SK-N-SH (cell line): ENCODE measurements at regions of chr12 and their contacts with region 1.

Region 1: DNA sequence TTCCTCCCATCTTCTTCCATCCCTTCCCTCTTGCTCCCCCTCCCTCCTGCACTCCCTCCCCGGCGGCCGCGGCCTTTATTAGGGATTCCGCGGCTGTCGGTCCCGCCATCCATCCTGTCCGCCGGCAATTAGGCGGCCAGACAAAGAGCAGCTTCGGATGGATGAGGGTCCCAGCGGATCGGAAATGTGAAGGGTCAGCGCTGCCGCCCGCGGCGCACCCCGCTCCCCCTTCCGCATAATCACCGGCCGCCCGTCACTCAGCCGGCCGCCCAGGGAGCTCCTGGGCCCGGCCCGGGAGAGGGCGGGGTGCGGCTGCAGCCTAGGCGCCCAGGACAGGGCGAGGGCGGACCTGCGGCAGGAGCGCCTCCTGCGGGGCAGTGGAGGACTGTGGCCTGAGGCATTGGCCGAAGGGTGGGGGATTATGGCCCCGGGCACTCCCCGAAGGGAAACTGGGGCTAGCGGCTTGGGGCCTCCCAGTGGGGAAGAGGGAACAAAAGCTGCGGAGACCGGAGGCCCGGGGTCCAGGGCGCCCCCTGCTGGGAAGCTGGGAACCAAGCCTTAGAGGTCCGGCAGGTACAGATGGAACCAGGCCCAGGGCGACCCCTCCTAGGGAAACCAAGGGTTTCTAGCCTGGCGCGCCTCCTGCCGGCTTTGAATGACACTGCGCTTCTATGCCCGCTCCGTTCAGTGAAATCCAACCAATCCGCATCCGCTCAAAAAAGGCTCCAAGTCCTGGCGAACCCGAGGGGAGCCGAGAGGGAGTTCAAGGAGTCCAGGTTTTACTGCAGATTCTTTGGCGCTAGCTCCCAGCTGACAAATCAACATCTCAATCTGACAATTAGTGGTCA is 4.4 kb upstream of the DNAJC22 start:
- DNase-seq: peak; percentile 96
- H3K4me3 ChIP-seq: peak overlapping the region; percentile 37 to 52
- H3K27ac ChIP-seq: no peak overlapping the region
- H3K4me1 ChIP-seq: peaks cover 14 to 39% of the 10 kb centered on the region in 2 experiments; a peak in 2 of 4 replicates
- H3K27me3 ChIP-seq: peaks cover 5% of the 10 kb centered on the region; the same call in 1 of the 2 replicates
- CTCF ChIP-seq: peak; percentile 95
- EP300 ChIP-seq: no peak
- RAD21 ChIP-seq: peak; percentile 71

Region 2: DNA sequence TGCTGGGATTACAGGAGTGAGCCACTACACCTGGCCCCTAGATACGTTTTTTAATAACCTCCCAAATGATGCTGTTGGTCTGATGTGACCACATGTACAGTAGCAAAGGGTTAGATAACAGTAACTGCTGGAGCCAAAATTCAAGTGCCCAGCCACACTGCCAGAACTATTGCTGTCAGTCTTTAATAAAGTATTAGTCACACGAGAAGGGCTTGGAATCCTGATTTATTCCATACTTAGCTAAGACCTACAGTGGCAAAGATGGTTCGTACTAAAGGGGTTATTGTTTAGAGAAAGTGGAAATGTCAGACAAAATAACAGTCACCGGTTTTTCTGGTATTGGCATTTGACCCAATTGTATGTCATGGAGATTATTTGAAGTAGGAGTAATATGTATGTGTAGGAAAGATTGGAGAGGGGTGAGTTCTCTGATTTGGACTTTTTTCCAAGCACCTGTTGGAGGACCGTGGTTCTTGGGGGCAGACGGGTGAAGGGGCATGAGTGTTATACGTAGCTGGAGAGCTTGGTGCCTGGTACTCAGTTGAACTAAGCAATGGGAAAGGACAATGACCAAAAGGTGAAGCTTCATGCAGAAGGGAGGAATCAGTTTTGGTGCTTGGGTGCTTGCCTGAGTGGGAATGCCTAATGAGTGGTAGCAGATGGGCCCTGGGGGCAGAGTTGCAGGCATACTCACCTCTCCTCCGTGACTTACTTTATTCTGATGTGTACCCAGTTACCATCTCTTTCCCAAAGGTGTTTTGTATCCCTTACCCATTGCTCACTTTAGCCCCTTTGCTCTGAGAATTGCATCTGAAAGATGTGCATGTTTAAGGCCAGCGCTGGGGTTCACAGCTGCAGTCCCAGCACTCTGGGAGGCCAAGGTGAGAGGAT is 67.6 kb before region 1 on chr12:
- CTCF ChIA-PET with region 1: interaction called, 658 read pairs
- POLR2A ChIA-PET with region 1: no interaction called
- DNase-seq: no peak
- H3K4me3 ChIP-seq: no peak overlapping the region
- H3K27ac ChIP-seq: no peak overlapping the region
- H3K4me1 ChIP-seq: peaks cover 6 to 15% of the 10 kb centered on the region in 2 experiments; a peak in 2 of 4 replicates
- H3K27me3 ChIP-seq: no peaks in the 10 kb centered on the region
- CTCF ChIP-seq: no peak
- EP300 ChIP-seq: no peak
- RAD21 ChIP-seq: no peak

Region 3: GRCh38 chr12:49322708-49323523 is 19.4 kb before region 1 on chr12 and contains the start of gene TROAP:
- CTCF ChIA-PET with region 1: interaction called, 48 read pairs
- POLR2A ChIA-PET with region 1: interaction called, 9 read pairs
- DNase-seq: peak; percentile 97
- H3K4me3 ChIP-seq: peak within 1 kb of the TSS; percentile 67 to 88
- H3K27ac ChIP-seq: peak within 1 kb of the TSS; percentile 58 to 65
- H3K4me1 ChIP-seq: peaks cover 0 to 14% of the 10 kb centered on the region in 2 experiments; a peak in 1 of 4 replicates
- H3K27me3 ChIP-seq: no peaks in the 10 kb centered on the region
- CTCF ChIP-seq: no peak
- EP300 ChIP-seq: no peak
- RAD21 ChIP-seq: no peak
- polyA plus RNA-seq, gene TROAP: 15.0 and 26.2 TPM in 2 replicates

Region 4: GRCh38 chr12:49366652-49367380 is 24.5 kb after region 1 on chr12:
- CTCF ChIA-PET with region 1: interaction called, 133 read pairs
- POLR2A ChIA-PET with region 1: no interaction called
- DNase-seq: peak; percentile 98
- H3K4me3 ChIP-seq: peak overlapping the region; percentile 79 to 91
- H3K27ac ChIP-seq: peak overlapping the region; percentile 90 to 95
- H3K4me1 ChIP-seq: peaks cover 3 to 6% of the 10 kb centered on the region in 2 experiments; a peak in 3 of 4 replicates
- H3K27me3 ChIP-seq: no peaks in the 10 kb centered on the region
- CTCF ChIP-seq: peak; percentile 37
- EP300 ChIP-seq: peak in 1 of 2 experiments; percentile 15; a peak in 1 of 4 replicates
- RAD21 ChIP-seq: no peak

Region 5: GRCh38 chr12:49580572-49581535 is 238.6 kb after region 1 on chr12:
- CTCF ChIA-PET with region 1: interaction called, 33 read pairs
- POLR2A ChIA-PET with region 1: no interaction called
- DNase-seq: peak; percentile 83
- H3K4me3 ChIP-seq: no peak overlapping the region; a peak in 1 of 4 replicates
- H3K27ac ChIP-seq: no peak overlapping the region; a peak in 1 of 4 replicates
- H3K4me1 ChIP-seq: peaks cover 0 to 18% of the 10 kb centered on the region in 2 experiments; a peak in 1 of 4 replicates
- H3K27me3 ChIP-seq: no peaks in the 10 kb centered on the region
- CTCF ChIP-seq: peak; percentile 88
- EP300 ChIP-seq: no peak; a peak in 1 of 4 replicates
- RAD21 ChIP-seq: peak; percentile 82